ENCODE measurements at regions of chrX and their contacts with region 1.

Region 1: DNA sequence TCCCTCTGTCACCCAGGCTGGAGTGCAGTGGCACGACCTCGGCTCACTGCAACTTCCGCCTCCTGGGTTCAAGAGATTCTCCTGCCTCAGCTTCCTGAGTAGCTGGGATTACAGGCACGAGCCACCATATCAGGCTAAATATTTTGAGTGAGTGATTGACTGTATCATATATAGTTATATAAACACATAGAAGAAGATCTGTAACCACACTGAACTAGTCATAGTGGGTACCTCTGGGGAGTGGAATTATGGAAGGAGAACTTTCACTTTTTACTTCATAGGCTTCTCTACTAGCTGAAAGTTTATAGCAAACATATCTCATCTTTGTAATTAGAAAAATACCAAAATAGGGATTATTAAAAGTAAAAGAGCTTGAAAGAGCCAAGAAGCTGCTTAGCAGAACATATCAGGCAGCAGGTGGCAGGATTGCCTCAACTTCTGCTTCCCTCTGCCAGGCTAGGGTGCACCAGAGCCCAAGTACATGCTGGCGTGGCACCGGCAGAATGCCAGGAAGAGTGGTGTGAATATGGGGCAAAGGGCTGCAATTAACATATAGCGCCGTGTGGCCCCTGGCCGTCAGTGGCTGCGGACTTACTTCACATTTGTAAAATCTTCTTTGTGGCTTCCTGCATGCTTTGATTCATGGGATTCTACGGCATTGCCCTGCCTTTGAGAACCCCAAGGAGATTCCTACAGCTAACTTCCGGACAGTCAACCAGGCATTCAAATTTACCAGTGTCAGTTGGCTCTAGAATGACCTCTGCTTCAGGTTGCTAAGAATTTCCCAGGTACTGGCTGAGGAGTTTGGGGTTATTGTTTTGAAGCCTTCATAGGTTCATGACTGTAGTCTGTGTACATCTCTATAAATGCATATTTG is 39.4 kb upstream of the CD40LG start:
- DNase-seq: peak; percentile 27 to 59
- ATAC-seq: peak in 3 of 4 donors; percentile 51 to 70 (median 59)
- H3K4me3 ChIP-seq: no peak overlapping the region
- H3K27ac ChIP-seq: no peak overlapping the region
- H3K4me1 ChIP-seq: no peaks in the 10 kb centered on the region
- H3K27me3 ChIP-seq: peaks cover 0 to 4% (median 0%) of the 10 kb centered on the region in 3 donors
- CTCF ChIP-seq: peak; percentile 40

Region 2: GRCh38 chrX:136694431-136695087 is 86.0 kb after region 1 on chrX:
- intact Hi-C with region 1: loop called in 1 of 2 experiments (anchors 5 kb)
- DNase-seq: no peak
- ATAC-seq: peak; percentile 53 to 75 (median 62)
- H3K4me3 ChIP-seq: no peak overlapping the region
- H3K27ac ChIP-seq: no peak overlapping the region
- H3K4me1 ChIP-seq: no peaks in the 10 kb centered on the region
- H3K27me3 ChIP-seq: peaks cover 0 to 4% (median 0%) of the 10 kb centered on the region in 3 donors
- CTCF ChIP-seq: peak; percentile 69

Measured in psoas muscle (tissue), 8 donors.